ENCODE measurements at regions of chr7 and their contacts with region 1.

Region 1: DNA sequence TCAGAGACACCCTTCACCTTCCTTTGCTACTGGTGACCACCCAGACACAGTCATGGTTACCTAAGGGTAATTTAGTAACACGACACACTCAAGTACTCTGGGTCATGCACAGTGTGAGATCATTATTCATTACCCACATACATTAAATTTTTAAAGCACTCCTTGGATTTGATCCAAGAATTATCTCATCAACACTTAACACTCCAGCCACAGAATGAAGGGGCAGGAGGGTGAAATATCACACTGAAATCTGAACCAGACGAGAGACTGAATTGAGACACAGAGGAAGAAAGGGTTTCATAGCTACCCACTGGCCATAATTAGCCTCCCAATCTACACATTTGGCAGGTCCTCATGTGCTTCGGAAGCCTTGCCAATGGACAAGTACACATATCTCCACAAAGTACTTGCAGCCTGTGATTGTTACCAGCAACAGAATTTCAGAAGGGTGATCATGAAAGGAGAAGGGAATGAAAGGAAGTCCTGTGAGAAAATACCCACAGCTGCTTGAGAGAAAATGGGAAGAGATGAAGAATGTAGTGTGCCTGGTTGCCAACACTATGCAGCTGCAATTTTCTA is 189.3 kb downstream of the POLR1F start:
- DNase-seq: no peak
- ATAC-seq: no peak
- H3K4me3 ChIP-seq: no peak overlapping the region
- H3K27ac ChIP-seq: no peak overlapping the region
- H3K4me1 ChIP-seq: no peaks in the 10 kb centered on the region
- H3K27me3 ChIP-seq: no peaks in the 10 kb centered on the region
- CTCF ChIP-seq: no peak
- POLR2A ChIP-seq: no peak
- RAD21 ChIP-seq: no peak

Region 2: GRCh38 chr7:19572566-19572965 is 53.0 kb after region 1 on chr7:
- CTCF ChIA-PET with region 1: no interaction called
- POLR2A ChIA-PET with region 1: no interaction called
- dilution Hi-C with region 1: no loop called
- in situ Hi-C with region 1: no loop called
- intact Hi-C with region 1: no loop called
- DNase-seq: no peak
- ATAC-seq: no peak
- H3K4me3 ChIP-seq: no peak overlapping the region
- H3K27ac ChIP-seq: no peak overlapping the region
- H3K4me1 ChIP-seq: no peaks in the 10 kb centered on the region
- H3K27me3 ChIP-seq: no peaks in the 10 kb centered on the region
- CTCF ChIP-seq: no peak
- POLR2A ChIP-seq: no peak
- RAD21 ChIP-seq: no peak

Region 3: DNA sequence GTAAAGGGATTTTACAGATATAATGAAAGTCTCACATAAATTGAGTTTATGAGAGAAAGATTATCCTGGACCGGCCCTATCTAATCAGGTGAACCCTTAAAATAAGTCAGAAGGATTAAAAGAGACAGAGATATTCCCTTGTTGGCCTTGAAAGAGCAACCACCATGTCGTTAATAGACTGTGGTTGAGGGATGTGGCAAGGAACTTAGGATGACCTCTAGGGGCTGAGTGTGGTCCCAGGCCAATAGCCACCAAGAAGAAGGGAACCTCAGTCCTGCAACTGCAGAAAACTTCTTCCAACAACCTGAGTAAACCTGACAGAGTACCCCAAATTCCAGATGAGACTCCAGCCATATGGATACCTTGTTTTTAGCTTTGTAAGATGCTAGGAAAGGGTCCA is 67.8 kb after region 1 on chr7:
- CTCF ChIA-PET with region 1: no interaction called
- POLR2A ChIA-PET with region 1: no interaction called
- dilution Hi-C with region 1: no loop called
- in situ Hi-C with region 1: no loop called
- intact Hi-C with region 1: loop called (anchors 10 kb)
- DNase-seq: no peak
- ATAC-seq: no peak
- H3K4me3 ChIP-seq: no peak overlapping the region
- H3K27ac ChIP-seq: no peak overlapping the region
- H3K4me1 ChIP-seq: no peaks in the 10 kb centered on the region
- H3K27me3 ChIP-seq: no peaks in the 10 kb centered on the region
- CTCF ChIP-seq: no peak
- POLR2A ChIP-seq: no peak
- RAD21 ChIP-seq: no peak

Measured in IMR-90 (cell line).